Aorta (tissue), 5 donors: ENCODE measurements at regions of chr6 and their contacts with region 1.

Region 1: GRCh38 chr6:52419809-52420670 is at the start of gene EFHC1:
- DNase-seq: peak; percentile 99 to 100
- ATAC-seq: peak; percentile 99
- H3K4me3 ChIP-seq: peak within 1 kb of the TSS; percentile 46 to 61
- H3K27ac ChIP-seq: peak within 1 kb of the TSS in 1 of 2 donors; percentile 73
- H3K4me1 ChIP-seq: peaks cover 0 to 5% of the 10 kb centered on the region in 2 donors
- H3K27me3 ChIP-seq: no peaks in the 10 kb centered on the region
- total RNA-seq, gene EFHC1: 13.2 to 29.0 TPM

Region 2: GRCh38 chr6:52087498-52087999 is 332.5 kb before region 1 on chr6 and contains the start of gene PKHD1:
- intact Hi-C with region 1: no loop called
- DNase-seq: no peak
- ATAC-seq: no peak
- H3K4me3 ChIP-seq: no peak within 1 kb of the TSS
- H3K27ac ChIP-seq: no peak within 1 kb of the TSS
- H3K4me1 ChIP-seq: no peaks in the 10 kb centered on the region
- H3K27me3 ChIP-seq: no peaks in the 10 kb centered on the region
- total RNA-seq, gene PKHD1: 0.06 TPM in 1 of 2 donors, not detected in the other

Region 3: GRCh38 chr6:52497652-52498408 is 77.8 kb after region 1 on chr6:
- intact Hi-C with region 1: loop called (anchors 5 kb)
- DNase-seq: no peak
- ATAC-seq: no peak
- H3K4me3 ChIP-seq: no peak overlapping the region
- H3K27ac ChIP-seq: peak overlapping the region; percentile 75 to 79
- H3K4me1 ChIP-seq: peaks cover 6 to 12% of the 10 kb centered on the region in 2 donors
- H3K27me3 ChIP-seq: no peaks in the 10 kb centered on the region

Region 4: GRCh38 chr6:52503848-52504781 is 84.1 kb after region 1 on chr6:
- intact Hi-C with region 1: loop called (anchors 5 kb)
- DNase-seq: peak; percentile 91 to 94
- ATAC-seq: peak; percentile 83
- H3K4me3 ChIP-seq: no peak overlapping the region
- H3K27ac ChIP-seq: peak overlapping the region in 1 of 2 donors; percentile 60
- H3K4me1 ChIP-seq: peaks cover 0 to 6% of the 10 kb centered on the region in 2 donors
- H3K27me3 ChIP-seq: no peaks in the 10 kb centered on the region

Region 5: DNA sequence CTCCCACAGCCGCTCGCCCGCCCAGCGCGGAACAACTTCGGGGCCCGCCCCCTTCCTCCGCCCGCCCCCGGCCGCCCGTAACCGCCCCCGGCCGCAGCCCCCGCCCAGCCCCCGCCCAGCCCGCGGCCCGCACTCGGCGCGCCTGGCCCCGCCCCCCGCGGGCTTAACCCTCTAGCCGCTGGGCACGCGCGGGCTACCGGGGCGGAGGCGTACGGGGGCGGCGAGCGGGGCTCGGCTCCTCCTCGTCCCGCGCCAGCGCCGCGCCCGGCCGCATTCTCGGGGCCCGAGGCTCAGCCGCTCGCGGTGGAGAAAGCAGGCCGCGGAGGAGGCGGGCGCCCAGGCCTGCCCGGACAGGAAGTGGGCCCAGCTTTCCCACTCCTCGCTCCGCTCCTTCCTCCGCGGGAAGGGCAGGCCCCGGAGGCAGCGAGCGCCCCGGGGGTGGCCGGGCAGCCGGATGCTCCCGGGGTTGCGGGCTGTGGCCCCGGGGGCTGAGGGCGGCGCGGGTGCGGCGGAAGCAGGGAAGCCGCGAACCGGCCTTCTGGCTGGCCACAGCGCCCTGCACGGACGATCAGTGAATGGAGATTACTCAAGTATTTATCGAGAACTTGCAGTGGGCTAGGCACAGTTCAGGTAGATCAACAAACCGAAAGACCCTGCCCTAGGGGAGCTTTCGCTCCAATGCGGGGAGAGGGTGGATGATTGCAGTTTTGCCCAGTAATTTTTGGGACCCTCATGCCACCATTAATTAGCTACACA is 157.2 kb after region 1 on chr6 and contains the start of gene TRAM2:
- intact Hi-C with region 1: loop called (anchors 2 to 5 kb)
- DNase-seq: peak; percentile 90 to 95
- ATAC-seq: peak; percentile 87
- H3K4me3 ChIP-seq: peak within 1 kb of the TSS; percentile 71 to 90
- H3K27ac ChIP-seq: peak within 1 kb of the TSS; percentile 86 to 88
- H3K4me1 ChIP-seq: peaks cover 0 to 2% of the 10 kb centered on the region in 2 donors
- H3K27me3 ChIP-seq: no peaks in the 10 kb centered on the region
- total RNA-seq, gene TRAM2: 38.0 to 39.5 TPM

Region 6: GRCh38 chr6:52598123-52598823 is 178.2 kb after region 1 on chr6:
- intact Hi-C with region 1: loop called (anchors 2 to 5 kb)
- DNase-seq: peak; percentile 71 to 84
- ATAC-seq: peak; percentile 79
- H3K4me3 ChIP-seq: no peak overlapping the region
- H3K27ac ChIP-seq: peak overlapping the region in 1 of 2 donors; percentile 41
- H3K4me1 ChIP-seq: peaks cover 2 to 3% of the 10 kb centered on the region in 2 donors
- H3K27me3 ChIP-seq: no peaks in the 10 kb centered on the region

Region 7: DNA sequence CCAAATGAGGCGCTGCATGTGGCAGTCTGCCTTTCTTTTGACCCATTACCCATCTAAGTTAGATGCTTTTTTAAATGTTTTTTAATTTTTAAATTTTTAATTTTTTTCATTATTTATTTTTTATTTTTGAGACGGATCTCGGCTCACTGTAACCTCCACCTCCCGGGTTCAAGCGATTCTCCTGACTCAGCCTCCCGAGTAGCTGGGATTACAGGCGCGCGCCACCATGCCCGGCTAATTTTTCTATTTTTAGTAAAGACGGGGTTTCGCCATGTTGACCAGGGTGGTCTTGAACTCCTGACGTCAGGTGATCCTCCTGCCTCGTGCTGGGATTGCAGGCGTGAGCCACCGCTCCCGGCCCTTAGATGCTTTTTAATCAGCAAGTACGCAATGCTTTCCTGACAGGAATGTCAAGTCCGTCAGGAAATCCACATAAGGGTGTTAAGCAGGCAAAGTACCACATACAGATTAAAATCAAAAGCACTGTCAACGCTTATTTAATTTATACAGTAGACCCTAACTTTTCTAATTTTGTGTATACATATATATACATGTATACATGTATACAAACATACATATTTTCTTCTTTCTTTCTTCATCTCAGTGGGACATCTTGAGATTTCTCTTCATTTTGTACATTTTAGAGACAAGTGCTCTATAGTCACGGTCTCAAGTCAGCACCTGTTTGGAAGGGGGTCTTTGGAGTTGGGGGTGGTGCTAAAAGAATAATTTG is 576.0 kb after region 1 on chr6:
- intact Hi-C with region 1: loop called (anchors 5 to 10 kb)
- DNase-seq: peak in 1 of 2 donors; percentile 57
- ATAC-seq: no peak
- H3K4me3 ChIP-seq: no peak overlapping the region
- H3K27ac ChIP-seq: peak overlapping the region in 1 of 2 donors; percentile 45
- H3K4me1 ChIP-seq: no peaks in the 10 kb centered on the region
- H3K27me3 ChIP-seq: no peaks in the 10 kb centered on the region